ENCODE measurements at regions of chr9 and their contacts with region 1.

Region 1: DNA sequence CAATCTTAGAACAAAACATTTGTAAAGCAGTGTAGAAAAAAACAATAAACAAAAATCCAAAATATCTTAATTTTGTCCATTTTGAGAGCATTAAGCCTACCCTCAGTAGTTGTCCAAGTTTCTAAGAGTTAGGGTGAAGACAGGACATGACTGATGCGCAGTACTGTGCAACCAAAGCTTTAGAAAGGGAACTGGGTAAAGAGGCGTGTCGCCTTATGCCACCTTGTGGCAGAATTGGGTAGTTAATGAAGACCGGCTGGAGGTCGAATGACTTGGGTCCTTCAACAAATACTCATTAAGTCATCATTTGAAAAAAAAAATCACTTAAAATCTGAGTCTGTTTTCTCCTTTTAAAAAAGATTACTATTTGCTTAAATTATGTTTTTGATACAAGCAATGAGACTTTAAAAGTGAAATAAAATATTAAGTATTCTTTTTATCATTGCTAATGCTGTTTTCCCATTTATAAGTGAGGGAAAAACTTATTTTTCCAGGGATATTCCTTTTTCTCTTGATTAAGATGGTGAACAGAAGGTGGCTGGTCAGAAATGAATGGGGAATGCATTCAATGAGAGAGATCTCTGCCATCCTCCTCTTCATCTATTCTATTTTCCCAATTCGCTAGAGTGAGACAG is 3.5 kb upstream of the RNF20 start:
- DNase-seq: peak; percentile 44
- ATAC-seq: peak; percentile 53
- H3K4me3 Mint-ChIP-seq: no peak overlapping the region
- H3K27ac Mint-ChIP-seq: no peak overlapping the region
- H3K4me1 Mint-ChIP-seq: peaks cover 21% of the 10 kb centered on the region
- H3K27me3 Mint-ChIP-seq: peaks cover 11% of the 10 kb centered on the region
- CTCF ChIP-seq: peak; percentile 45

Region 2: GRCh38 chr9:100714372-100715099 is 815.7 kb before region 1 on chr9:
- CTCF ChIA-PET with region 1: no interaction called
- POLR2A ChIA-PET with region 1: no interaction called
- intact Hi-C with region 1: loop called (anchors 10 kb)
- DNase-seq: no peak
- ATAC-seq: no peak
- H3K4me3 Mint-ChIP-seq: no peak overlapping the region
- H3K27ac Mint-ChIP-seq: no peak overlapping the region
- H3K4me1 Mint-ChIP-seq: no peaks in the 10 kb centered on the region
- H3K27me3 Mint-ChIP-seq: no peaks in the 10 kb centered on the region
- CTCF ChIP-seq: no peak

Region 3: GRCh38 chr9:101398068-101398929 is 131.9 kb before region 1 on chr9 and contains the starts of genes MRPL50 and ZNF189:
- CTCF ChIA-PET with region 1: interaction called, 3 read pairs
- POLR2A ChIA-PET with region 1: interaction called, 23 read pairs
- intact Hi-C with region 1: loop called (anchors 1 kb)
- DNase-seq: peak; percentile 82
- ATAC-seq: peak; percentile 94
- H3K4me3 Mint-ChIP-seq: peak within 1 kb of the TSS; percentile 97
- H3K27ac Mint-ChIP-seq: peak within 1 kb of the TSS; percentile 98
- H3K4me1 Mint-ChIP-seq: peaks cover 74% of the 10 kb centered on the region
- H3K27me3 Mint-ChIP-seq: no peaks in the 10 kb centered on the region
- CTCF ChIP-seq: no peak
- total RNA-seq, gene MRPL50: 14.0 and 16.1 TPM in 2 replicates
- total RNA-seq, gene ZNF189: 16.1 and 21.1 TPM in 2 replicates

Region 4: DNA sequence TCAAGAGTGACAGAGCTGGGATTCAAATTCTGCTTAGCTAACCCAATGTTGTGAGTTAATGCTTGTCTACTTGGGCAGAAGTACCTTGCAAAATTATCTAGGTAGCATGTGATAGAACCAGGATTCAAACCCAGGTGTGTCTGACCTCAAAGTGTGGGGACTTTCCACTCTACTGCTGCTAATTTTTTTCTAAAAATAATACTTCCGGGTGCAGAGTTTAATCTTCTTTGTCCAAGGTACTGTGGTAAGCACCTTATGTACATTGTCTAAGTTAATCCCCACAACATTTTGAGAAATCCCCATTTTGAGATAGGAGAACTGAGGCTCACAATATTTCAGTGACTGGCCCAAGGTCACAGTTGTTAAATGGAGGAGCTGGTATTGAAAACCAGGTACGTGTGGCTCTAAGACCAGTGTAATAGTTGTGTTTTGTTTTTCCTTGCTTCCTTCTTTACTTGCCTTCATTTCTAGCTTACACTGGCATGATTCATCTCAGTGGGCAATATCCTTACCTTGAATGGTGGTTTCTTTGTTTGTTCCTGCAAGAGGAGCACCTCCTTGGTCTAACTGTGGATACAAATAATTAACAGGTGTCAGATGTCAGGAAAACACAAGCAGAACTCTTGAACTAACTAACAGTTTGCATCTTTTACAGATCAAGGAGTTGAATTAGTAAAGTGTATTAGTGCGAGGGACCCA is 102.1 kb before region 1 on chr9:
- CTCF ChIA-PET with region 1: no interaction called
- POLR2A ChIA-PET with region 1: no interaction called
- intact Hi-C with region 1: no loop called
- DNase-seq: no peak
- ATAC-seq: no peak
- H3K4me3 Mint-ChIP-seq: no peak overlapping the region
- H3K27ac Mint-ChIP-seq: peak overlapping the region; percentile 20
- H3K4me1 Mint-ChIP-seq: peaks cover 13% of the 10 kb centered on the region
- H3K27me3 Mint-ChIP-seq: peaks cover 7% of the 10 kb centered on the region
- CTCF ChIP-seq: no peak

Region 5: GRCh38 chr9:101449140-101449721 is 81.0 kb before region 1 on chr9:
- CTCF ChIA-PET with region 1: interaction called, 19 read pairs
- POLR2A ChIA-PET with region 1: interaction called, 4 read pairs
- intact Hi-C with region 1: loop called (anchors 1 kb)
- DNase-seq: peak; percentile 46
- ATAC-seq: peak; percentile 97
- H3K4me3 Mint-ChIP-seq: peak overlapping the region; percentile 78
- H3K27ac Mint-ChIP-seq: no peak overlapping the region
- H3K4me1 Mint-ChIP-seq: peaks cover 11% of the 10 kb centered on the region
- H3K27me3 Mint-ChIP-seq: peaks cover 39% of the 10 kb centered on the region
- CTCF ChIP-seq: peak; percentile 28

Region 6: DNA sequence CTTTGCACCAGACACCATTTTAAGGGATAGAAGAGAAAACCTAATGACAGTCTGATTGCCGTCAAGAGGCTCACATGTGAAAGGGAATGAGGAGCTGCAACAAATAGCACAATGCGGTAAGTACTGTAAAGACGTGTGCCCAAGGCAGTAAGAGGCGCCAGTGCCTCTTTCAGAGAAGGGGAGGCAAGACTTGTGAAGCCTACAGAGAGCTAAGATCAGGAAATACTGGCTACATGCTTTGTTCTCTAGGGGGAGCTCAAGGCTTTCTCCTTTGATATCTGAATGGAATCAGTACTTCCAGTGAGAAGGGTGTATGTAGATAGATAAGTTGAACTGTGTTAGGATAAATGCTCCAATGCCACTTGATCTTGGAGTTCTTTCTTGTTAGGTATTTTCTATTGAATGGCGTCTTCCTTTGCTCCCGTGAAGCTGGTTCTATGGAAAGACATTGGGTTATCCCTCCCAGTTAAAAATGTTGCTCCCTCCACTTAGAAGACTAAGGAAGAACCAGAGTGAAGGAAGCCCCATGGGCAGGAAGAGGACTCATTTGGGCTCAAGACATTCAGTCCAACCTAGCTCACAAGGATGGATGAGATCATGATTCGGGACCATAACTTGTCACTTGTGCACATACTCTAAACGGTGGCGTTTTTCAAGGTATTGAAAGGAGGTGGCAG is 71.1 kb before region 1 on chr9:
- CTCF ChIA-PET with region 1: interaction called, 20 read pairs
- POLR2A ChIA-PET with region 1: no interaction called
- intact Hi-C with region 1: loop called (anchors 1 kb)
- DNase-seq: no peak
- ATAC-seq: no peak
- H3K4me3 Mint-ChIP-seq: no peak overlapping the region
- H3K27ac Mint-ChIP-seq: no peak overlapping the region
- H3K4me1 Mint-ChIP-seq: no peaks in the 10 kb centered on the region
- H3K27me3 Mint-ChIP-seq: peaks cover 11% of the 10 kb centered on the region
- CTCF ChIP-seq: no peak

Region 7: GRCh38 chr9:101514071-101514470 is 16.1 kb before region 1 on chr9:
- CTCF ChIA-PET with region 1: no interaction called
- POLR2A ChIA-PET with region 1: no interaction called
- intact Hi-C with region 1: no loop called
- DNase-seq: no peak
- ATAC-seq: no peak
- H3K4me3 Mint-ChIP-seq: no peak overlapping the region
- H3K27ac Mint-ChIP-seq: no peak overlapping the region
- H3K4me1 Mint-ChIP-seq: no peaks in the 10 kb centered on the region
- H3K27me3 Mint-ChIP-seq: peaks cover 7% of the 10 kb centered on the region
- CTCF ChIP-seq: no peak

Region 8: DNA sequence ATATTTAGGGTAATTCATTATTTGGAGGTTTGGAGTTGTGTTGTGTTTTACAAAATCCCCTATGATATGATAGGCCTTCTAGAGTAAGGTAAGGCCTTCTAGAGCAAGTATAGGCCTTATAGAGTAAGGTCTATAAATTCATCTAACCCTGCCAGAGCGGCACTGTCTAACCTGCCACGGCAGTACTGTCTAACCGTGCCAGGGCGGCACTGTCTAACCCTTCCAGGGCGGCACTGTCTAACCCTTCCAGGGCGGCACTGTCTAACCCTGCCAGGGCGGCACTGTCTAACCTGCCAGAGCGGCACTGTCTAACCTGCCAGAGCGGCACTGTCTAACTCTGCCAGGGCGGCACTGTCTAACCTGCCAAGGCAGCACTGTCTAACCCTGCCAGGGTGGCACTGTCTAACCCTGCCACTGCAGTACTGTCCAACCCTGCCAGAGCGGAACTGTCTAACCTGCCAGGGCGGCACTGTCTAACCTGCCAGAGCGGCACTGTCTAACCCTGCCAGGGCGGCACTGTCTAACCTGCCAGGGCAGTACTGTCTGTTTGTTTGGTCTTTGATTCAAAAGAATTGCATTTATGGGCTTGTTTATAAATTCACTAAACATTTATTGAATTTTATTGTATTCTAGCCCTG is 13.0 kb after region 1 on chr9:
- CTCF ChIA-PET with region 1: no interaction called
- POLR2A ChIA-PET with region 1: no interaction called
- intact Hi-C with region 1: loop called (anchors 2 kb)
- DNase-seq: no peak
- ATAC-seq: no peak
- H3K4me3 Mint-ChIP-seq: no peak overlapping the region
- H3K27ac Mint-ChIP-seq: no peak overlapping the region
- H3K4me1 Mint-ChIP-seq: no peaks in the 10 kb centered on the region
- H3K27me3 Mint-ChIP-seq: no peaks in the 10 kb centered on the region
- CTCF ChIP-seq: no peak

Region 9: DNA sequence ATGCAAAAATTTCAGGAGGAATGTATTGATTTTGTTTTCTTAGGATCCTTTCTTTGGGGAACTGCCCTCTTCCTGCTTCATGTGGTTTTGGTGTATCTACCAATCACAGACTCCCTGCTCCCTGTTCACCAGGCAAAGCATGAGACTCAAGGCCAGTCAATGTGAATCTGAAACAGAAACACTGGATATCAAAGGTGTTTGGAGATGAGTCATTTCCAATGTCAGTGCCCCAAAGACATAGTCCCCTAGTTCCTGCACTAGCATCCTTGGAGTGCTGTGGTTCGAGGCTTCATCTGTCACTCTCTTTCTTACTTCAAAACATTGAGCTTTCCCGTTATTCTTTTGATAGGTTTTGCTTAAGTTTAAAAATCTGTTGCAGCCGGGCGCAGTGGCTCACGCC is 56.5 kb after region 1 on chr9:
- CTCF ChIA-PET with region 1: no interaction called
- POLR2A ChIA-PET with region 1: no interaction called
- intact Hi-C with region 1: no loop called
- DNase-seq: no peak
- ATAC-seq: no peak
- H3K4me3 Mint-ChIP-seq: no peak overlapping the region
- H3K27ac Mint-ChIP-seq: no peak overlapping the region
- H3K4me1 Mint-ChIP-seq: no peaks in the 10 kb centered on the region
- H3K27me3 Mint-ChIP-seq: no peaks in the 10 kb centered on the region
- CTCF ChIP-seq: no peak

Measured in activated B cell treated with CpG ODN at 0.5 μM for 24 hours (primary cell).